CD8-positive, alpha-beta T cell (primary cell): ENCODE measurements at regions of chr10 and their contacts with region 1.

Region 1: GRCh38 chr10:91389636-91390512 is 20.3 kb upstream of the HECTD2 start:
- DNase-seq: peak in 3 of 9 experiments; percentile 27 to 84 (median 77)
- ATAC-seq: peak; percentile 99
- H3K4me3 ChIP-seq: no peak overlapping the region
- H3K4me3 Mint-ChIP-seq: peak overlapping the region; percentile 42
- H3K27ac ChIP-seq: no peak overlapping the region
- H3K27ac Mint-ChIP-seq: no peak overlapping the region
- H3K4me1 ChIP-seq: peaks cover 4% of the 10 kb centered on the region
- H3K4me1 Mint-ChIP-seq: peaks cover 8% of the 10 kb centered on the region
- H3K27me3 ChIP-seq: no peaks in the 10 kb centered on the region
- H3K27me3 Mint-ChIP-seq: peaks cover 14% of the 10 kb centered on the region
- CTCF ChIP-seq: peak; percentile 75

Region 2: GRCh38 chr10:90879062-90879461 is 510.8 kb before region 1 on chr10:
- CTCF ChIA-PET with region 1: no interaction called
- POLR2A ChIA-PET with region 1: no interaction called
- intact Hi-C with region 1: loop called in 1 of 2 experiments (anchors 5 kb)
- DNase-seq: no peak
- ATAC-seq: no peak
- H3K4me3 ChIP-seq: no peak overlapping the region
- H3K4me3 Mint-ChIP-seq: no peak overlapping the region
- H3K27ac ChIP-seq: no peak overlapping the region
- H3K27ac Mint-ChIP-seq: no peak overlapping the region
- H3K4me1 ChIP-seq: no peaks in the 10 kb centered on the region
- H3K4me1 Mint-ChIP-seq: peaks cover 7% of the 10 kb centered on the region
- H3K27me3 ChIP-seq: no peaks in the 10 kb centered on the region
- H3K27me3 Mint-ChIP-seq: no peaks in the 10 kb centered on the region
- CTCF ChIP-seq: no peak

Region 3: GRCh38 chr10:91367127-91367531 is 22.7 kb before region 1 on chr10:
- CTCF ChIA-PET with region 1: no interaction called
- POLR2A ChIA-PET with region 1: no interaction called
- intact Hi-C with region 1: no loop called
- DNase-seq: no peak
- ATAC-seq: no peak
- H3K4me3 ChIP-seq: no peak overlapping the region
- H3K4me3 Mint-ChIP-seq: no peak overlapping the region
- H3K27ac ChIP-seq: no peak overlapping the region
- H3K27ac Mint-ChIP-seq: no peak overlapping the region
- H3K4me1 ChIP-seq: no peaks in the 10 kb centered on the region
- H3K4me1 Mint-ChIP-seq: no peaks in the 10 kb centered on the region
- H3K27me3 ChIP-seq: peaks cover 0 to 3% of the 10 kb centered on the region in 2 experiments
- H3K27me3 Mint-ChIP-seq: peaks cover 25% of the 10 kb centered on the region
- CTCF ChIP-seq: no peak

Region 4: GRCh38 chr10:91378061-91378460 is 11.8 kb before region 1 on chr10:
- CTCF ChIA-PET with region 1: interaction called, 15 read pairs
- POLR2A ChIA-PET with region 1: interaction called, 3 read pairs
- intact Hi-C with region 1: no loop called
- DNase-seq: peak in 6 of 9 experiments; percentile 10 to 83 (median 30)
- ATAC-seq: peak; percentile 97
- H3K4me3 ChIP-seq: no peak overlapping the region
- H3K4me3 Mint-ChIP-seq: no peak overlapping the region
- H3K27ac ChIP-seq: no peak overlapping the region
- H3K27ac Mint-ChIP-seq: no peak overlapping the region
- H3K4me1 ChIP-seq: peaks cover 15% of the 10 kb centered on the region
- H3K4me1 Mint-ChIP-seq: peaks cover 25% of the 10 kb centered on the region
- H3K27me3 ChIP-seq: no peaks in the 10 kb centered on the region
- H3K27me3 Mint-ChIP-seq: peaks cover 19% of the 10 kb centered on the region
- CTCF ChIP-seq: no peak

Region 5: DNA sequence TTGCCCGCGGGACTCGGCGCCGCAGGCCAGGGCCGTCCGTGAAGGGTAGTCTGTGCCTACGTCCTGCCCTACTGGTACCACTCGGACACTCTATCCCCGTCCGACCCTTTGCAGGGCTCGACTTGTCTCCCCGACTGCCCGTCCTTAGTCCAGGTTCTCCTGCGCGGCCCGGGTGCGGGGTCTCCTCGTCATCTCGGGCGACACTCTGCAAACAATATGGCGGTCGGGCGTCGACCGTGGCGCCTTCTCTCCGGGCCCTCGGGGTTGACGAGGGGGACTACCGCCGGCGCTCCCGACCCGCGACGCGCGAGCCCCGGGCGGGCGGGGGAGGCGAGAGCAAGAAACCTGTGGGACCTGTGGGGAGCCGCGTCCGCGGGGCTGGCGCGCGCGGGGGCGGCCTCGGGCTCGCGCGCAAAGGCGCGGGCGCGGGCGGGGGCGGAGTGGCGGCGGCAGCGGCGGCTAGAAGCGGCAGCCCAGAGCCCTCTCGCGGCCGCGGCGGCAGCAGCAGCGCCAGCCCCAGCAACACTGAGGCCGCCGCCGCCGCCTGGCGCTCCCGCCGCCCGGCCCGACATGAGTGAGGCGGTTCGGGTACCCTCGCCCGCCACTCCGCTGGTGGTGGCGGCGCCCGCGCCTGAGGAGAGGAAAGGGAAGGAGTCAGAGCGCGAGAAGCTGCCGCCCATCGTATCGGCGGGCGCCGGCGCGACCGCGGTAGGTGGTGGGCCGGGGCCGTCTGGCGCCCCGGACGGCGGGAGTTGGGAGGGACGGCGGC is 20.2 kb after region 1 on chr10 and contains the start of gene HECTD2:
- CTCF ChIA-PET with region 1: interaction called, 5 read pairs
- POLR2A ChIA-PET with region 1: interaction called, 6 read pairs
- intact Hi-C with region 1: loop called (anchors 1 to 2 kb)
- DNase-seq: peak; percentile 65 to 92 (median 82)
- ATAC-seq: peak; percentile 86
- H3K4me3 ChIP-seq: peak within 1 kb of the TSS; percentile 91 to 97
- H3K4me3 Mint-ChIP-seq: peak within 1 kb of the TSS; percentile 86
- H3K27ac ChIP-seq: peak within 1 kb of the TSS; percentile 90 to 95
- H3K27ac Mint-ChIP-seq: peak within 1 kb of the TSS; percentile 90
- H3K4me1 ChIP-seq: peaks cover 12% of the 10 kb centered on the region
- H3K4me1 Mint-ChIP-seq: peaks cover 13% of the 10 kb centered on the region
- H3K27me3 ChIP-seq: no peaks in the 10 kb centered on the region
- H3K27me3 Mint-ChIP-seq: no peaks in the 10 kb centered on the region
- CTCF ChIP-seq: peak; percentile 41
- total RNA-seq, gene HECTD2: 0.69 to 1.5 TPM

Region 6: DNA sequence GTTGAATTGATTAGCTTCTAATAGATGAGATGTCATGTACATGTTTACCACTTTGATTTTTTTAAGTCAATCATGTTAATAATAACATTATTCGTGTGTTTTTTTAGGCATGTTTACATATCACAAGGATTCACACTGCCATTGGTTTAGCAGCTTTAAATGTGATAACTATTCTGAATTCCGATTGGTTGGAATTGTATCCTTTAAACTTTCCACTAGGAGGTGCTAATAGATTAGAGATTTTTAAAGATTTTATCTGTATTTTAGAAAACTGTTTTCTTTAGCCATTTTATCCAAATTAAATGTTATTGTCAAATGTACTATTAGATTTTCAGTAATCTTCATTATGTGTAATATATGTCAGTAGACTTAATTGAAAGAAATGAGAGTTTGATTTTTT is 103.4 kb after region 1 on chr10:
- CTCF ChIA-PET with region 1: no interaction called
- POLR2A ChIA-PET with region 1: no interaction called
- intact Hi-C with region 1: loop called in 1 of 2 experiments (anchors 5 kb)
- DNase-seq: no peak
- ATAC-seq: no peak
- H3K4me3 ChIP-seq: no peak overlapping the region
- H3K4me3 Mint-ChIP-seq: no peak overlapping the region
- H3K27ac ChIP-seq: no peak overlapping the region
- H3K27ac Mint-ChIP-seq: no peak overlapping the region
- H3K4me1 ChIP-seq: no peaks in the 10 kb centered on the region
- H3K4me1 Mint-ChIP-seq: no peaks in the 10 kb centered on the region
- H3K27me3 ChIP-seq: no peaks in the 10 kb centered on the region
- H3K27me3 Mint-ChIP-seq: no peaks in the 10 kb centered on the region
- CTCF ChIP-seq: no peak

Region 7: GRCh38 chr10:91632671-91633550 is 243.0 kb after region 1 on chr10 and contains the start of gene PPP1R3C:
- CTCF ChIA-PET with region 1: interaction called, 10 read pairs
- POLR2A ChIA-PET with region 1: no interaction called
- intact Hi-C with region 1: loop called (anchors 1 kb)
- DNase-seq: peak in 6 of 9 experiments; percentile 9 to 47 (median 17)
- ATAC-seq: peak; percentile 46
- H3K4me3 ChIP-seq: peak within 1 kb of the TSS in 1 of 2 experiments; percentile 54
- H3K4me3 Mint-ChIP-seq: peak within 1 kb of the TSS; percentile 69
- H3K27ac ChIP-seq: no peak within 1 kb of the TSS
- H3K27ac Mint-ChIP-seq: no peak within 1 kb of the TSS
- H3K4me1 ChIP-seq: peaks cover 15% of the 10 kb centered on the region
- H3K4me1 Mint-ChIP-seq: peaks cover 9% of the 10 kb centered on the region
- H3K27me3 ChIP-seq: peaks cover 3 to 4% of the 10 kb centered on the region in 2 experiments
- H3K27me3 Mint-ChIP-seq: peaks cover 59% of the 10 kb centered on the region
- CTCF ChIP-seq: no peak
- total RNA-seq, gene PPP1R3C: not detected

Region 8: DNA sequence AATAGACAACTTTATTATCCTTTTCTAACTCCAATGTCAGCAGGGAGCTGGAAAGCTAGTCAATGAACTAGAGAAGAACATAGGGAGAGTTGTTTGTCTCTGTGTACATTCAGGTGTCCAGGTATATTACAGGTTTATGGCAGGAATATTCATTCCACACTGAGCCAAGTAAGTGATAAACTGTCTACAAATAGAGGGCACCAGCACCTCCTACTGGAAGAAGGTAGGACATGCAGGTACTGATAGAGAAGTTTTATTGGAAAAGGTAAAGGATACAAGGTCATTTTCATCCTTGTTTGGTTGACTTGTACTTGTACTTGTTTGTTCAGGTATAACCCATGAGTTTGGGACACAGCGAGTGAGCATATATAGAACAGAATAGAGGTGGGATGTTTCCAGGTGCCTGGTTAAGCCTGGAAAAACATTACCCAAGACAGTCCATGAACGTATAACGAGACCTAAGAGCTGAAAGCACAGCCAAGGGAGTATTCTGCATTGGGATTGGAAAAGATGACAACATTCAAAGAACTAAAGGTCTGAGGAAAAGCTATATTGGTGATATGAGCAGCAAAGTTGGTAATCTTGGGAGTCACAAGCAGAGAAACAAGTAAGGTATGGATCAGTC is 304.4 kb after region 1 on chr10:
- CTCF ChIA-PET with region 1: no interaction called
- POLR2A ChIA-PET with region 1: no interaction called
- intact Hi-C with region 1: loop called in 1 of 2 experiments (anchors 5 kb)
- DNase-seq: peak in 2 of 9 experiments; percentile 33 to 42
- ATAC-seq: no peak
- H3K4me3 ChIP-seq: no peak overlapping the region
- H3K4me3 Mint-ChIP-seq: no peak overlapping the region
- H3K27ac ChIP-seq: no peak overlapping the region
- H3K27ac Mint-ChIP-seq: no peak overlapping the region
- H3K4me1 ChIP-seq: no peaks in the 10 kb centered on the region
- H3K4me1 Mint-ChIP-seq: no peaks in the 10 kb centered on the region
- H3K27me3 ChIP-seq: no peaks in the 10 kb centered on the region
- H3K27me3 Mint-ChIP-seq: peaks cover 8% of the 10 kb centered on the region
- CTCF ChIP-seq: peak; percentile 69